ENCODE measurements at regions of chr6 and their contacts with region 1.

Region 1: DNA sequence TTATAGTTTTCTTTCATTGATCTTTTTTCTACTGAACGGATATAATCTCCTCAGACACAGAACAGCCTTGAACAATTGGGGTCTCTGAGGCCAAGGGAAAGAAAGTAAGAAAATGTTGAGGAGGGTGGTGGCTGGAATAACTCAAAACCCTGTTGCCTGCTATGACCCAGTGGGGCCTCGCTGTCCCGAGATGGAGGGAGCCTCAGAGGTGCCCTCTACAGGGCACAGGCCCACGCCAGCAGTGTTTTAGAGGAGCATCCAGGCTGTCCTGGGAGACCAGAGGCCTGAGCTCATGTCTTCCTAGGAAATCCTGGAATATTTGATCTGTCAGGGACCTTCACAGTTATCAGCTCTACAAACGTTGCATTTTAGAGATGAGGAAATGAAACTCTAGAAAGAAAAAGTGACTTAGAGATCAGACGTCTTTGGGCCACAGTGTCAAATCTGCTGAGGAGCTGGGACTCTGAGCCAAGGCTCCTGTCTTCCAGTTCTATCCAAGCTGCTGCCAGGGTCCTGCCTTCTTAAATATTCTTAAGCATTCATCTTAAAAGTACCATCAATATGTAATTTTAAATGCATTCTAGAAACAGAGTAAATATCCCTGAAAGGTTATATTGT is 26.3 kb downstream of the ALDH5A1 start:
- DNase-seq: peak; percentile 67
- ATAC-seq: peak; percentile 97
- H3K4me3 ChIP-seq: no peak overlapping the region
- H3K27ac ChIP-seq: no peak overlapping the region
- H3K4me1 ChIP-seq: no peaks in the 10 kb centered on the region
- H3K27me3 ChIP-seq: no peaks in the 10 kb centered on the region
- CTCF ChIP-seq: peak; percentile 93

Region 2: GRCh38 chr6:23797041-23797440 is 724.0 kb before region 1 on chr6:
- CTCF ChIA-PET with region 1: no interaction called
- POLR2A ChIA-PET with region 1: no interaction called
- intact Hi-C with region 1: no loop called
- DNase-seq: no peak
- ATAC-seq: no peak
- H3K4me3 ChIP-seq: no peak overlapping the region
- H3K27ac ChIP-seq: no peak overlapping the region
- H3K4me1 ChIP-seq: no peaks in the 10 kb centered on the region
- H3K27me3 ChIP-seq: peaks cover 11% of the 10 kb centered on the region
- CTCF ChIP-seq: no peak

Region 3: GRCh38 chr6:24417338-24417737 is 103.7 kb before region 1 on chr6:
- CTCF ChIA-PET with region 1: no interaction called
- POLR2A ChIA-PET with region 1: interaction called, 20 read pairs
- intact Hi-C with region 1: no loop called
- DNase-seq: no peak
- ATAC-seq: no peak
- H3K4me3 ChIP-seq: no peak overlapping the region
- H3K27ac ChIP-seq: no peak overlapping the region
- H3K4me1 ChIP-seq: no peaks in the 10 kb centered on the region
- H3K27me3 ChIP-seq: no peaks in the 10 kb centered on the region
- CTCF ChIP-seq: no peak

Region 4: GRCh38 chr6:24494821-24495795 is 25.9 kb before region 1 on chr6 and contains the start of gene ALDH5A1:
- CTCF ChIA-PET with region 1: interaction called, 14 read pairs
- POLR2A ChIA-PET with region 1: no interaction called
- intact Hi-C with region 1: no loop called
- DNase-seq: peak; percentile 62
- ATAC-seq: peak; percentile 80
- H3K4me3 ChIP-seq: peak within 1 kb of the TSS; percentile 72
- H3K27ac ChIP-seq: no peak within 1 kb of the TSS
- H3K4me1 ChIP-seq: peaks cover 5% of the 10 kb centered on the region
- H3K27me3 ChIP-seq: no peaks in the 10 kb centered on the region
- CTCF ChIP-seq: 0 out of 2 replicates have a peak, but pooled peaks have one; percentile 25
- total RNA-seq, gene ALDH5A1: 11.9 and 12.2 TPM in 2 replicates

Region 5: GRCh38 chr6:24581084-24581669 is 60.1 kb after region 1 on chr6:
- CTCF ChIA-PET with region 1: interaction called, 6 read pairs
- POLR2A ChIA-PET with region 1: no interaction called
- intact Hi-C with region 1: loop called (anchors 5 kb)
- DNase-seq: peak; percentile 84
- ATAC-seq: peak; percentile 88
- H3K4me3 ChIP-seq: no peak overlapping the region
- H3K27ac ChIP-seq: no peak overlapping the region
- H3K4me1 ChIP-seq: peaks cover 16% of the 10 kb centered on the region
- H3K27me3 ChIP-seq: no peaks in the 10 kb centered on the region
- CTCF ChIP-seq: peak; percentile 94

Region 6: DNA sequence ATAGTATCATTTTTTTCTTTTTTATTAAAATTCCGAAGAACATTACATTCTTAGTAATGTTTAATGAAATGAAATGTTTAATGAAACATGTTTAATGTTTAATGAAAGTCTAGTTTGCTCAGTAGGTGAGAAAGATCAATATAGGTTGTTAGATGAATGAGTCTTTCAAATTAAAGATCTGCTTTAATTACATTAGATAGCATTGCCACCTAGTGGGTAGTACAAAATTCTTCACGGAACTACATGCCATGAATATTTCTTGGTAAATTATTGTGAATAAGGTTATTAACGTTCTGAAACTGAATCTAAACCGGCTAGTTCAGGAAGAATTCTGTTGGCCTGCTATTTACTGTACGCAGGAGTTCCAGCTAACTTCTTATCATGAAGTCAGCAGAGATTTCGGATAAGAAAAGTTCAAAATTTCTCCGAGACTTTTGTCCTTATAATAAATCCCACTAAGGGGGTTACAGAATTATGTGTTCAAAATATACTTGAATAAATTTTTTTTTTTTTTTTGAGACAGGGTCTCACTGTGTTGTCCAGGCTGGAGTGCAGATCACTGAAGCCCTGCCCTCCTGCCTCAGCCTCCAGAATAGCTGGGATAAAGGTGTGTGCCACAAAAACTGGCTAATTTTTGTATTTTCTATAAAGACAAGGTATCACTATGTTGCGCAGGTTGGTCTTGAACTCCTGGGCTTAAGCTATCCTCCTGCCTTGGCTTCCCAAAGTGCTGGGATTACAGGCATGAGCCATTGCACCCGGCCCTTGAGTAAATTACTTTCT is 245.8 kb after region 1 on chr6:
- CTCF ChIA-PET with region 1: interaction called, 3 read pairs
- POLR2A ChIA-PET with region 1: no interaction called
- intact Hi-C with region 1: loop called (anchors 2 kb)
- DNase-seq: peak; percentile 62
- ATAC-seq: peak; percentile 75
- H3K4me3 ChIP-seq: no peak overlapping the region
- H3K27ac ChIP-seq: no peak overlapping the region
- H3K4me1 ChIP-seq: no peaks in the 10 kb centered on the region
- H3K27me3 ChIP-seq: no peaks in the 10 kb centered on the region
- CTCF ChIP-seq: peak; percentile 84

Region 7: GRCh38 chr6:25229671-25230321 is 708.8 kb after region 1 on chr6:
- CTCF ChIA-PET with region 1: no interaction called
- POLR2A ChIA-PET with region 1: no interaction called
- intact Hi-C with region 1: no loop called
- DNase-seq: peak; percentile 74
- ATAC-seq: peak; percentile 90
- H3K4me3 ChIP-seq: no peak overlapping the region
- H3K27ac ChIP-seq: peak overlapping the region; percentile 18
- H3K4me1 ChIP-seq: peaks cover 20% of the 10 kb centered on the region
- H3K27me3 ChIP-seq: no peaks in the 10 kb centered on the region
- CTCF ChIP-seq: no peak

Measured in PC-3 (cell line).